ENCODE measurements at regions of chr14 and their contacts with region 1.

Region 1: GRCh38 chr14:94364037-94364436 is 24.4 kb downstream of the SERPINA1 start:
- DNase-seq: no peak
- ATAC-seq: peak; percentile 67
- H3K4me3 ChIP-seq: no peak overlapping the region
- H3K27ac ChIP-seq: no peak overlapping the region
- H3K4me1 ChIP-seq: no peaks in the 10 kb centered on the region
- H3K27me3 ChIP-seq: no peaks in the 10 kb centered on the region
- CTCF ChIP-seq: no peak
- EP300 ChIP-seq: no peak
- POLR2A ChIP-seq: no peak
- RAD21 ChIP-seq: no peak

Region 2: GRCh38 chr14:94380225-94381148 is 16.4 kb after region 1 on chr14:
- CTCF ChIA-PET with region 1: no interaction called
- POLR2A ChIA-PET with region 1: no interaction called
- RAD21 ChIA-PET with region 1: no interaction called
- SMC1A ChIA-PET with region 1: no interaction called
- in situ Hi-C with region 1: no loop called
- intact Hi-C with region 1: loop called (anchors 1 kb)
- DNase-seq: no peak
- ATAC-seq: no peak
- H3K4me3 ChIP-seq: no peak overlapping the region
- H3K27ac ChIP-seq: no peak overlapping the region
- H3K4me1 ChIP-seq: no peaks in the 10 kb centered on the region
- H3K27me3 ChIP-seq: no peaks in the 10 kb centered on the region
- CTCF ChIP-seq: no peak
- EP300 ChIP-seq: no peak
- POLR2A ChIP-seq: no peak
- RAD21 ChIP-seq: no peak

Region 3: DNA sequence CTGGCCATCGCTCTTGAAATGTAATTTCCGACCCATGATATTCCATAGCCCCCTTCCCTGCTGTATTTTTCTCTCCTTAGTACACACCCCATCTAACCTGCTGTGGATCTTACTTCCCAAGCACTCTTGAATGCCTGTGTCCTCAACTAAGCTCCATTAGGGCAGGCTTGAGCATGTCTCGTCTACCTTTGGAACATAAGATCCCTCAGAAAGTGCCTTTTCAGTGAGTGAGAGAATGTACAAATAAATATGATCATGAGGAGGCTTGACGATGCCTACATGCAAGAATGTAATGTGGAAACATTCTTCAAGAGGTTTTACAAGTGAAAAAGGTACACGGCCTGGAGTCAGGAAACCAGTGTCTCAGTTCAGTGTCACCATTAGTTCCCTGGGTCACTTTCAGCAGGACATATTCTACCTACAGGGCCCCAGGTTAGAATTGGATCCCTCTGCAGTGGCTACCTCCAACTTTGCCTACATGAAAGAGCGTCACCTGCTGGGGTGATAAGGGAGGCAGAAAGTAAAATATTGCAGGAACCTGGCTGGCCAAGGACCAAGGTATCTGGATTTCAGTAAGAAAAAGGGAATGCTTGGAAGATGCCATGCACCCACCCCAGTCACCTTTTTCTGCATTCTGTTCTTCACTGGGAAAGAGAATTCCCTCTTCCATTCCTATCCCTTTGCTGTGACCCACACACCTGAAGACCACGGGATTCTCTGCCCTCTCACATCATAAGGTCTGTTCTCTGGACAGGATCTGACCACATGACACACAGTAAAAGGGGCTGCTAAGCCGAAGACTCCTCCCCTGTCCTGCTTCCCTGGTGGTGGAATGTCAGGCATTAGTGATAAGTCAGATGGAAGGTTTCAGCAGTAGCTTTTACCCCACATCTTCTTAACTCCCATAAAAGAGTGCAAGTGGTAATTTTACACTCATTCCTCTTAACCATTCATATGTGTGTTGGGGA is 48.9 kb after region 1 on chr14:
- CTCF ChIA-PET with region 1: no interaction called
- POLR2A ChIA-PET with region 1: no interaction called
- RAD21 ChIA-PET with region 1: no interaction called
- SMC1A ChIA-PET with region 1: no interaction called
- in situ Hi-C with region 1: no loop called
- intact Hi-C with region 1: no loop called
- DNase-seq: no peak
- ATAC-seq: no peak
- H3K4me3 ChIP-seq: no peak overlapping the region
- H3K27ac ChIP-seq: no peak overlapping the region
- H3K4me1 ChIP-seq: no peaks in the 10 kb centered on the region
- H3K27me3 ChIP-seq: no peaks in the 10 kb centered on the region; a peak in 1 of 4 replicates
- CTCF ChIP-seq: peak; percentile 29 to 34 (median 32); a peak in 4 of 6 replicates
- EP300 ChIP-seq: no peak
- POLR2A ChIP-seq: no peak
- RAD21 ChIP-seq: peak; percentile 33; the same call in 1 of the 2 replicates

Region 4: GRCh38 chr14:94448071-94448808 is 84.2 kb after region 1 on chr14:
- CTCF ChIA-PET with region 1: no interaction called
- POLR2A ChIA-PET with region 1: no interaction called
- RAD21 ChIA-PET with region 1: no interaction called
- SMC1A ChIA-PET with region 1: no interaction called
- in situ Hi-C with region 1: no loop called
- intact Hi-C with region 1: no loop called
- DNase-seq: no peak
- ATAC-seq: no peak
- H3K4me3 ChIP-seq: no peak overlapping the region
- H3K27ac ChIP-seq: no peak overlapping the region
- H3K4me1 ChIP-seq: no peaks in the 10 kb centered on the region
- H3K27me3 ChIP-seq: peaks cover 0 to 1% of the 10 kb centered on the region in 2 experiments; a peak in 2 of 4 replicates
- CTCF ChIP-seq: no peak
- EP300 ChIP-seq: no peak
- POLR2A ChIP-seq: no peak
- RAD21 ChIP-seq: no peak

Region 5: GRCh38 chr14:95483309-95484165 is 1119.5 kb after region 1 on chr14:
- CTCF ChIA-PET with region 1: no interaction called
- POLR2A ChIA-PET with region 1: no interaction called
- RAD21 ChIA-PET with region 1: no interaction called
- SMC1A ChIA-PET with region 1: no interaction called
- in situ Hi-C with region 1: no loop called
- intact Hi-C with region 1: no loop called
- DNase-seq: no peak
- ATAC-seq: no peak
- H3K4me3 ChIP-seq: no peak overlapping the region
- H3K27ac ChIP-seq: no peak overlapping the region
- H3K4me1 ChIP-seq: peaks cover 24% of the 10 kb centered on the region
- H3K27me3 ChIP-seq: no peaks in the 10 kb centered on the region
- CTCF ChIP-seq: no peak
- EP300 ChIP-seq: no peak
- POLR2A ChIP-seq: no peak
- RAD21 ChIP-seq: no peak